ENCODE measurements at regions of chr2 and their contacts with region 1.

Region 1: GRCh38 chr2:60484133-60484645 is 69.3 kb downstream of the BCL11A start:
- DNase-seq: no peak
- ATAC-seq: peak; percentile 66
- H3K4me3 Mint-ChIP-seq: peak overlapping the region; percentile 78
- H3K27ac Mint-ChIP-seq: peak overlapping the region; percentile 93
- H3K4me1 Mint-ChIP-seq: peaks cover 96% of the 10 kb centered on the region
- H3K27me3 Mint-ChIP-seq: no peaks in the 10 kb centered on the region
- CTCF ChIP-seq: no peak

Region 2: DNA sequence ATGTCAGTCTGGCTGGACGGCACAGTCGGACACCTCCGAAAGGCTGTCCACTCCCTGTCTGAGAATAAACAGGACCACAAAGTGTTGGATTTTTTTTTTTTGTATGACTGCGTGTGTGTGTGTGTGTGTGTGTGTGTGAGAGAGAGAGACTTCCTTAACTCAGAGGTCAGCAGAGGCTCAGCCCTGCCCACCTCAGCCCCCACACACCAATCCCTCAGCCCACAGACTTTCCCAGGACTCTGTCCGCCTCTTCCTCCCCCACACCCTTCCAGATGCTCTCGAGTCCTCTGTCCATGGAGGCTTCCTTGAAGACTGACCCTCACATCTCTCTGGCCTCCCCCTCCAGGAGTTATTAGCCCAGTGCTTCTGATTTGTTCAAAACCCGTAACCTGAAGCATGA is 78.0 kb before region 1 on chr2:
- CTCF ChIA-PET with region 1: no interaction called
- POLR2A ChIA-PET with region 1: interaction called, 10 read pairs
- intact Hi-C with region 1: no loop called
- DNase-seq: no peak
- ATAC-seq: no peak
- H3K4me3 Mint-ChIP-seq: no peak overlapping the region
- H3K27ac Mint-ChIP-seq: peak overlapping the region; percentile 62
- H3K4me1 Mint-ChIP-seq: peaks cover 81% of the 10 kb centered on the region
- H3K27me3 Mint-ChIP-seq: no peaks in the 10 kb centered on the region
- CTCF ChIP-seq: no peak

Region 3: DNA sequence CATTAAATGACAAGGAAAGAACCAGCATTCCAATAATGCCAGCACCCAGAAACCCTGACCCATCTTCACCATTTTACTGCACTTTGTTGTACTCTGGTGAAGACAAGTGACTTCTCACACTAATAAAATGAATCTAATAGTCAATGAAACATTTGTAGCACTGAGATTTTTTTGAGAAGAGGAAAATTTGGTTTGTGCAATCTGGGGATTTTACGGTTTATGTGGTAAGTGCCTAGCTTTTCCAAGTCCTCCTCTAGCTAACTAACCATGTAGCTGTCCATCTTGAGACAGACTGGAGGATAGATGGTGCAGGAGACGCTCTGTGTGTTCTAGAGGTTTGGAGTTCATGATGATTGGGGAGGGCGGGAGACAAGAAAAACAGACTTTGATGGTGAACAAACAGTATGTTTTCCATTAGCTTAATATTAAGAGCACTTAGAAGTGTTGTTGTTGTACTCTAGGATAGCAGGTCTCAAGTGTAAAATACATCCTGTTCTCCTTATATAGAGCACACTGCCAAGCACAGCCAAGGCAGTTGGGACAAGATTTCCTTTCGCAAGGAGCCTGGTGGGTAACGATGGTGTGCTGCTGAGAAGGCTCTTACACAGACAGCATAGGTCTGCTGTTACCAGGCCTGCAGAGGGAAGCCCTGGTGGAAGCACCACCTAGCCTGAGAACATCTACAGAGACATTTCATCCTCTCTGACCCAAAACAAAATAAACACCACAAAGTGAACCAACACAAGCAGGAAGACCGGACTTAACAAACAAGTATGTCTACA is 14.5 kb before region 1 on chr2:
- CTCF ChIA-PET with region 1: interaction called, 3 read pairs
- POLR2A ChIA-PET with region 1: interaction called, 3 read pairs
- intact Hi-C with region 1: loop called (anchors 2 kb)
- DNase-seq: no peak
- ATAC-seq: no peak
- H3K4me3 Mint-ChIP-seq: no peak overlapping the region
- H3K27ac Mint-ChIP-seq: peak overlapping the region; percentile 84
- H3K4me1 Mint-ChIP-seq: peaks cover 87% of the 10 kb centered on the region
- H3K27me3 Mint-ChIP-seq: no peaks in the 10 kb centered on the region
- CTCF ChIP-seq: no peak

Region 4: GRCh38 chr2:60498816-60499429 is 14.7 kb after region 1 on chr2:
- CTCF ChIA-PET with region 1: interaction called, 3 read pairs
- POLR2A ChIA-PET with region 1: interaction called, 13 read pairs
- intact Hi-C with region 1: loop called (anchors 1 kb)
- DNase-seq: peak; percentile 40
- ATAC-seq: peak; percentile 64
- H3K4me3 Mint-ChIP-seq: peak overlapping the region; percentile 64
- H3K27ac Mint-ChIP-seq: peak overlapping the region; percentile 84
- H3K4me1 Mint-ChIP-seq: peaks cover 99% of the 10 kb centered on the region
- H3K27me3 Mint-ChIP-seq: no peaks in the 10 kb centered on the region
- CTCF ChIP-seq: no peak

Region 5: DNA sequence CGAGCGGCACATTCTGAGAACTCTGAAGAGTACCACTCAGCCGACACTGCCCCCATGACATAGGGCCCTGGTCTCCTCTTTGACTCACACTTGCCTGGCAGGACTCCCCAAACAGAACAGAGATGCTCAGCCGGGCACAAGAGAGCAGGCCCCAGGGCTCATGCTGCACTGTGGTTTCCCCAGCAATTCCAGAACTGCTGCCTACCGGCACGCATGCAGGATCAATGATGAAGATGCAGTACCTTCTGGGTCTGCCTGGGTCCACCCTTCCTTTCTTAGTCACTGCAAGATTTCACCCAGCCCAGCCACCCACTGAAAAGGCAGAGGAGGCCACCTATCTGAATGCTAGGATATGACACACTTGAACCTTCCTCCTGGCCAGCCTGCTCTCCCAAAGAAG is 19.9 kb after region 1 on chr2:
- CTCF ChIA-PET with region 1: interaction called, 3 read pairs
- POLR2A ChIA-PET with region 1: interaction called, 13 read pairs
- intact Hi-C with region 1: loop called (anchors 2 kb)
- DNase-seq: no peak
- ATAC-seq: peak; percentile 43
- H3K4me3 Mint-ChIP-seq: peak overlapping the region; percentile 58
- H3K27ac Mint-ChIP-seq: peak overlapping the region; percentile 90
- H3K4me1 Mint-ChIP-seq: peaks cover 98% of the 10 kb centered on the region
- H3K27me3 Mint-ChIP-seq: no peaks in the 10 kb centered on the region
- CTCF ChIP-seq: no peak

Region 6: DNA sequence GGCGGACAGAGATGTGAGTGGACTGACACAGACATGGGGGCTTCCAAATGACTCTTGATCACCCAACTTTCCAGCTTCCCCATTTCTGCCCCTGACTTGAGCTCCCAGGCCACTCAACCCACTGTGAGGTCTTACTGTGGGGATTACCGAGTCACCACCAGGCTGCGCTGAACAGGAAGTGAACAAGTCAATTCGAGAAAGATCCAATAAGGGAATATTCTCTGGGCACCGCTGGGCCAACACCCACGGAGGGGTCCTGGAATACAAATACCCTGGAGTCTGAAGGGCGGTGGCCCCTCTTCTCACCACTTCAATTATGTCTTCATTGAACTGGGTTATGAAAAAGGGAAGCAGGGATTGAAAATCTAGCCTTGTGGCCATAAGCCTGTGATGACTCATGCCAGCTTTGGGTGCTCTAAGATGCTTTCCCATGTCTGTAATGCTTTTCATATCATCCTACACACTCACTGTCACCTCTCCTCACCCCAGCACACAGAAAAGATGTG is 31.6 kb after region 1 on chr2:
- CTCF ChIA-PET with region 1: no interaction called
- POLR2A ChIA-PET with region 1: interaction called, 8 read pairs
- intact Hi-C with region 1: loop called (anchors 5 kb)
- DNase-seq: peak; percentile 57
- ATAC-seq: peak; percentile 76
- H3K4me3 Mint-ChIP-seq: peak overlapping the region; percentile 68
- H3K27ac Mint-ChIP-seq: peak overlapping the region; percentile 91
- H3K4me1 Mint-ChIP-seq: peaks cover 97% of the 10 kb centered on the region
- H3K27me3 Mint-ChIP-seq: no peaks in the 10 kb centered on the region
- CTCF ChIP-seq: no peak

Region 7: DNA sequence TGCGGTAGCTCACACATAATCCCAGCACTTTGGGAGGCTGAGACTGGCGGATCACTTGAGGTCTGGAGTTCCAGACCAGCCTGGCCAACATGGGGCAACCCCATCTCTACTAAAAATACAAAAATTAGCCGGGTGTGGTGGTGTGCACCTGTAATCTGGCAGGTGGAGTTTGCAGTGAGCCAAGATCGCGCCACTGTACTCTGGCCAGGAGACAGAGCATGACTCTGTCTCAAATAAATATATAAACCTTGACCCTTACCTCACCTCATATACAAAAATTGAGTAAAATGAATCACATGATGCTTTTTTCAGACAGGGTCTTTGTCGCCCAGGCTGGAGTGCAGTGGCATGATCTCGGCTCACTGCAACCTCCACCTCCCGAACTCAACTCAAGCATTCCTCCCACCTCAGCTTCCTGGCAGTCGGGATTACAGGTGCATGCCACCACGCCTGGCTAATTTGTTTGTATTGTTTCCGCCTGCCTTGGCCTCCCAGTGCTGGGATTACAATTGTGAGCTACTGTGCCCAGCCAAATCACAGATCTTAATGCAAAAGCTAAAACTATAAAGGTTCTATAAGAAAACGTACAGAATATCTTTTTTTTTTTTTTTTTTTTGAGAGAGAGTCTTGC is 1028.7 kb after region 1 on chr2:
- CTCF ChIA-PET with region 1: no interaction called
- POLR2A ChIA-PET with region 1: no interaction called
- intact Hi-C with region 1: no loop called
- DNase-seq: no peak
- ATAC-seq: no peak
- H3K4me3 Mint-ChIP-seq: no peak overlapping the region
- H3K27ac Mint-ChIP-seq: peak overlapping the region; percentile 56
- H3K4me1 Mint-ChIP-seq: no peaks in the 10 kb centered on the region
- H3K27me3 Mint-ChIP-seq: no peaks in the 10 kb centered on the region
- CTCF ChIP-seq: no peak

Measured in activated B cell treated with CpG ODN at 0.5 μM for 24 hours (primary cell).